Activated naive CD4-positive, alpha-beta T cell treated with anti-CD3 and anti-CD28 coated beads, Interleukin-2, amount 10 ng/mL, durations not matched to agents 7 days and 5 days (primary cell): ENCODE measurements at regions of chr7 and their contacts with region 1.

Region 1: GRCh38 chr7:12067141-12067831 is 143.8 kb upstream of the TMEM106B start:
- DNase-seq: peak; percentile 69
- H3K4me3 Mint-ChIP-seq: no peak overlapping the region
- H3K27ac Mint-ChIP-seq: no peak overlapping the region
- H3K4me1 Mint-ChIP-seq: no peaks in the 10 kb centered on the region
- H3K27me3 Mint-ChIP-seq: peaks cover under 1% of the 10 kb centered on the region

Region 2: DNA sequence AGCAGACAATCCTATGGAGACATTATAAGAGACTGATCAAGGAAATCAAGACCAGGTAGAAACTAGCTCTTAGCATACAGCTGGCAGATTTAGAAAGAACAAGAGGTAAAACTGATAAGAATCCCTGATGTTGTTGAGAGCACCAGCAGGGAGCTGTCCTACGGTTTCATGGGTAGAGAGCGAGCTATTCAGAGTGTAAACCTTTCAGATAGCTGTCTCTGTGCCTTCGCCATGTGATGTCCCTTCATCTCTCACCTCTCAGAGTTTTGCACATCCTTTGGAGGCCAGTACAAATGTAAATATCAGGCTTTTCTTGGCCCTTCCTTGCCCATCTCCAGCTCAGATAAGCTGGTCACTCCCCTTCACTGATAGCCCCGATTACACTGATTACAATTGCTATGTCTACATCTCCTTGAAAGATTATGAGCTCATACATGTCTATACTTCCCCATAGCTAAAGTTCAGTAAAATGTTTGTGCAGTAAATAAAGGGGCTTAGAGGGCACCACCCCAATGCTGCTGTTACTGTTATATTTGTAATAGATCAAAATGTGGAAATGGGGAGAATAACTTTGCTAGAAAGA is 257.2 kb before region 1 on chr7:
- CTCF ChIA-PET with region 1: no interaction called
- DNase-seq: no peak
- H3K4me3 Mint-ChIP-seq: no peak overlapping the region
- H3K27ac Mint-ChIP-seq: no peak overlapping the region
- H3K4me1 Mint-ChIP-seq: no peaks in the 10 kb centered on the region
- H3K27me3 Mint-ChIP-seq: no peaks in the 10 kb centered on the region

Region 3: DNA sequence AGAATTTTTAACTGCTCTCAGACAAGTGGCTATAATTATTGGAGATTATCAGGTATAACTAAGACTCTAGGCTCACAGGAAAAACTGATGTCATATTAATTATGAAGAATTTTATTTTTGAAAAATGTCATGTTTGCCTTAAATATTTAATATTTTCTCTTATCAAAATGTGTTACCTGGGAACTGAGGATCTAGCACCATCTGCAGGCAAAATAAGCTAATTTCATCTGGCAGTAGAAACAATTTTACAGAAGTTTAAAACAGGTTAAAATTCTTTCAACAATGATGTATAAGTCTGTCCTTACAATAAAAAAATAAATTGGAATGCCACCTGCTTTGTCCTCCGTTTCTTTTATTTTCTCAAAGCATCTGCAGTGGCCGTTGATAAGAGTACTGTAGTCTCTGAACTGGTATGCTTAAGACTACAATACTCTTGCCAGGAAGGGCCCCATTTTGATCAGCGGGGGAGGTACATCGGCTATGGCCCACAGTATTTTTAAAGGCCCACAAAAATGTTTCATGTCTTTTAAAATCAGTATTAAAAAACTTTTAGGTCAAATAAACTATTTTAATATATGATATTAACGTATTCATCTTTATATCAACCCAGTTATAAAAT is 255.1 kb after region 1 on chr7:
- CTCF ChIA-PET with region 1: interaction called, 32 read pairs
- DNase-seq: no peak
- H3K4me3 Mint-ChIP-seq: no peak overlapping the region
- H3K27ac Mint-ChIP-seq: no peak overlapping the region
- H3K4me1 Mint-ChIP-seq: no peaks in the 10 kb centered on the region
- H3K27me3 Mint-ChIP-seq: no peaks in the 10 kb centered on the region